AG04450 (cell line): ENCODE measurements at regions of chr11 and their contacts with region 1.

Region 1: GRCh38 chr11:69642913-69643632 is 2.1 kb downstream of the CCND1 start:
- DNase-seq: peak; percentile 54
- H3K4me3 ChIP-seq: peak overlapping the region; percentile 99
- H3K27ac ChIP-seq: peak overlapping the region; percentile 57
- H3K27me3 ChIP-seq: no peaks in the 10 kb centered on the region
- CTCF ChIP-seq: peak; percentile 77

Region 2: GRCh38 chr11:69101115-69101791 is 541.8 kb before region 1 on chr11:
- CTCF ChIA-PET with region 1: interaction called, 52 read pairs
- POLR2A ChIA-PET with region 1: interaction called, 25 read pairs
- DNase-seq: peak; percentile 33
- H3K4me3 ChIP-seq: no peak overlapping the region
- H3K27ac ChIP-seq: no peak overlapping the region
- H3K27me3 ChIP-seq: no peaks in the 10 kb centered on the region
- CTCF ChIP-seq: peak; percentile 99

Region 3: DNA sequence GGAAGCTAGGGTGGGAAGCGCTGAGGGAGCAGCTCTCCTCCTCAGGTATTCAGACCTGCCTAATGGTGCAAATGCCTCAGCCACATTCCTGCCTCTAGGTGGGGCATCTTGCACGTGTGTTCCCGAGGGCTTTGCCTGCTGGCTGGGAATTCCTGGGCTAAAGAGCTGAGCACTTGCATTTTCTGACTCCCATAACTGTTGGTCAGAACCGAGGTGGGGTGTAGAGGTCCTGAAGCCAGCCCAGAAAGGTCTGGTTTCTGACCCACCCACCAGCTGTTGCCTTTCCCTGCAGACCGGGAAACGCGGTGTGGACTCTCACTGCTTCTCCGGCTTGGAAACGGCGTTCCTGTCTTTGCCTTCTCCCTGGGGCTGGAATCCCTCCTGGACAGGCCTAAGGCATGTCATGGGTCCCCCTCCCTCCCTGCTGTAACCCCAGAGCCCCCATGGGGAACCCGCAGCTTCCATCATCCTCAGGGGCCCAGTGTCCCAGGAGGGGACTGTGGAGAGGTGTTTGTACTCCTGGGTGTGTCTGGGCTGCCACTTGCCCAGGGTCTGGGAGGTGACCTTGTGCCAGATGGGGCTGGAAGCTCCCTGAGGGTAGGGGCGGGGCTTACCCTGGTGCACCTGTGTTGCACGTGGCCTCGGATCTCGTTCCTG is 511.3 kb before region 1 on chr11:
- CTCF ChIA-PET with region 1: interaction called, 29 read pairs
- POLR2A ChIA-PET with region 1: interaction called, 5 read pairs
- DNase-seq: peak; percentile 45
- H3K4me3 ChIP-seq: no peak overlapping the region
- H3K27ac ChIP-seq: no peak overlapping the region
- H3K27me3 ChIP-seq: no peaks in the 10 kb centered on the region
- CTCF ChIP-seq: peak; percentile 83

Region 4: GRCh38 chr11:69292221-69292648 is 350.8 kb before region 1 on chr11:
- CTCF ChIA-PET with region 1: interaction called, 19 read pairs
- POLR2A ChIA-PET with region 1: interaction called, 5 read pairs
- DNase-seq: no peak
- H3K4me3 ChIP-seq: no peak overlapping the region
- H3K27ac ChIP-seq: no peak overlapping the region
- H3K27me3 ChIP-seq: no peaks in the 10 kb centered on the region
- CTCF ChIP-seq: peak; percentile 80

Region 5: GRCh38 chr11:69352715-69353325 is 290.3 kb before region 1 on chr11:
- CTCF ChIA-PET with region 1: no interaction called
- POLR2A ChIA-PET with region 1: interaction called, 11 read pairs
- DNase-seq: peak; percentile 93
- H3K4me3 ChIP-seq: no peak overlapping the region
- H3K27ac ChIP-seq: peak overlapping the region; percentile 75
- H3K27me3 ChIP-seq: no peaks in the 10 kb centered on the region
- CTCF ChIP-seq: no peak

Region 6: DNA sequence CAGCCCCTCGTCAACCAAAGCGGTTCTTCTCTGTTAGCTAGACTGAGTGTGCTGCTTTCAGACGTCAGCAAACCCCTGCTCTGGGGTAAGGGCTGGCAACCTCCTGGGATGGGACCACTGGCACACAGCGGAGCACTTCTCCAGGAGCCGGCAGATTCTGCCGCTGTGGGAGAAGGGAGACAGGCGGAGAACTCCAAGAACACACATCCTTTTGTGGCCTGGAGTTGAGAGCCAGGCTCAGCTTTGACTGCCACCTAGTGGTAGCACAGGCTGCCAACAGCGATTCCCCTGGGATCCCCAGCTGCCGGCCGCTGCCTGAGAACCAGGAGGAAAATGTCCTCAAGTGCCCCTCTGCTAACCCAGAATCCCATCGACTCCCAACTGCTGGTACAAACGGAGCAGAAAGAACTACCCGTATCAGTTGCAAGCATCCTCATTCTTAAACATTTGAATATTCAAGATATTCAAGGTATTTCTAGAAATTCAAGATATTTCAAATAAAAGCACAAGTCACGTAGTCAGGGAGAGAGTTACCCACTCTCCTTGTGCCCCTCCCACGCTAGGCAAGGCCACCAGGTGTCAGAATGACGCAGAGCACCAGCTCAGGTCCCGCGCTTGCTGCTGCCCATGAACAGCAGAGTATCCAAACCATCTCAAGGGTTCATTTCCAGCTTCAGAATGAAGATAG is 27.2 kb after region 1 on chr11:
- CTCF ChIA-PET with region 1: interaction called, 9 read pairs
- POLR2A ChIA-PET with region 1: interaction called, 12 read pairs
- DNase-seq: peak; percentile 69
- H3K4me3 ChIP-seq: no peak overlapping the region
- H3K27ac ChIP-seq: no peak overlapping the region
- H3K27me3 ChIP-seq: no peaks in the 10 kb centered on the region
- CTCF ChIP-seq: peak; percentile 97